Mucosa of descending colon (tissue), 3 donors: ENCODE measurements at regions of chr12 and their contacts with region 1.

Region 1: DNA sequence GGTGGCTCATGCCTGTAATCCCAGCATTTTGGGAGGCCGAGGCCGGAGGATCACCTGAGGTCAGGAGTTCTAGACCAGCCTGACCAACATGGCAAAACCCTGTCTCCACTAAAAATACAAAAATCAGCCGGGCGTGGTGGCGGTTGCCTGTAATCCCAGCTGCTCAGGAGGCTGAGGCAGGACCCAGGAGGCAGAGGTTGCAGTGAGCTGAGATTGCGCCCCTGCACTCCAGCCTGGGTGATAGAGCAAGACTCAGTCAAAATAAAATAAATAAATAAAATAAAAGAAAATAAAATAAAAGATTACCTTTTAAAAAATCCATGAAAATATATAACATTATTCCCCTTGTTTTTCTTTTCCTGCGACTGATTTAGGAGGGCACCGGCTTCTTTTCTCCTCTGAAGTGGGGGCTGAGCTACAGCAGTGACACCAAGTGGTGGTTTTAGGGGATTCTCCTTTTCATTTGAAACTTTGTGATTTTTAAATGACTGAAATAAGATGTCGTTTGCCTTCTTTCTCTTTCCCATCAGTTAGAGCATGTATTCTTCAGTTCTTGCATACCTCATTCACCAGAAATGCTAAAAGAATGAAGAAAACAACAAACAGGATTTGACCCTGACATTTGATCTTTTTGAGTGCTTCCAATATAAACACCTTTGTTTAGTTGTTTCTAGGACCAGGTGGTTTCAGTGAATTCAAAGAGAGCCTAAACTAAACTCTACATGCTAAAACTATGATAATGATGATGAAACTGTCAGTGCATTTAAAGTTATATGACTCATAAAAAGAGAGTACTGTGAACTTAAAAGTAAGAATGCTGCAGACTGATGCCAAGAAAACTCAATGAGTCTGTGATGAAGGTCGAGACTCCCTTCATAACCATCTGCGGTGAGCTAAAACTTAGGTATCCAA is 22.6 kb upstream of the PKP2 start:
- DNase-seq: no peak
- ATAC-seq: peak; percentile 60
- H3K4me3 ChIP-seq: no peak overlapping the region
- H3K4me1 ChIP-seq: no peaks in the 10 kb centered on the region
- CTCF ChIP-seq: peak; percentile 7

Region 2: GRCh38 chr12:32755654-32756475 is 163.3 kb before region 1 on chr12 and contains the start of gene YARS2:
- intact Hi-C with region 1: loop called in 1 of 2 experiments (anchors 10 kb)
- DNase-seq: peak; percentile 90 to 97 (median 95)
- ATAC-seq: peak; percentile 97
- H3K4me3 ChIP-seq: peak within 1 kb of the TSS; percentile 75
- H3K4me1 ChIP-seq: peaks cover 20% of the 10 kb centered on the region
- CTCF ChIP-seq: no peak
- total RNA-seq, gene YARS2: 11.7 to 13.4 (median 12.0) TPM

Region 3: DNA sequence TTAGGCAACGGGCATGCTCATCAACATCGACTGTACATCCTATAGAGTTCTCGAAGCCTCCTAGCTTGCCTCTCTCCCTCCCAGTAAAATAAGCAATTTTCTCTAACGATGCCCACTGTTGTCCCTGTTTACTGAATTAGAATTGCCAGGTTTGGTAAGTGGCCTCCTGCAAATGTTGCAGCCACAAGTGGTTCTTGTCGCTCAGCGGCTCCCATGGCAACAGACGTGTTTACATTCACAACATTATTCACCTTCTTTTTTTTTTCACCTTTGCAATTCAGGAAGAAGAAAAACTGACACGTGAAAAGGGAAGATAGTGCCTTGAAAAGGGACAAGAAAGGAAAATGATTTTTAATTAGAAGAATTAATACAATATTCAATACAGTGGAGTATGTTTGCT is 78.3 kb after region 1 on chr12:
- intact Hi-C with region 1: no loop called
- DNase-seq: no peak
- ATAC-seq: no peak
- H3K4me3 ChIP-seq: no peak overlapping the region
- H3K4me1 ChIP-seq: no peaks in the 10 kb centered on the region
- CTCF ChIP-seq: no peak